Endothelial cell of umbilical vein (primary cell): ENCODE measurements at regions of chr17 and their contacts with region 1.

Region 1: GRCh38 chr17:50626037-50626574 is 8.6 kb upstream of the ABCC3 start:
- DNase-seq: peak; percentile 65
- H3K4me3 ChIP-seq: no peak overlapping the region
- H3K27ac ChIP-seq: no peak overlapping the region
- H3K4me1 ChIP-seq: peaks cover 2% of the 10 kb centered on the region
- H3K27me3 ChIP-seq: peaks cover 0 to 5% of the 10 kb centered on the region in 2 experiments
- CTCF ChIP-seq: peak; percentile 67 to 94
- POLR2A ChIP-seq: no peak

Region 2: DNA sequence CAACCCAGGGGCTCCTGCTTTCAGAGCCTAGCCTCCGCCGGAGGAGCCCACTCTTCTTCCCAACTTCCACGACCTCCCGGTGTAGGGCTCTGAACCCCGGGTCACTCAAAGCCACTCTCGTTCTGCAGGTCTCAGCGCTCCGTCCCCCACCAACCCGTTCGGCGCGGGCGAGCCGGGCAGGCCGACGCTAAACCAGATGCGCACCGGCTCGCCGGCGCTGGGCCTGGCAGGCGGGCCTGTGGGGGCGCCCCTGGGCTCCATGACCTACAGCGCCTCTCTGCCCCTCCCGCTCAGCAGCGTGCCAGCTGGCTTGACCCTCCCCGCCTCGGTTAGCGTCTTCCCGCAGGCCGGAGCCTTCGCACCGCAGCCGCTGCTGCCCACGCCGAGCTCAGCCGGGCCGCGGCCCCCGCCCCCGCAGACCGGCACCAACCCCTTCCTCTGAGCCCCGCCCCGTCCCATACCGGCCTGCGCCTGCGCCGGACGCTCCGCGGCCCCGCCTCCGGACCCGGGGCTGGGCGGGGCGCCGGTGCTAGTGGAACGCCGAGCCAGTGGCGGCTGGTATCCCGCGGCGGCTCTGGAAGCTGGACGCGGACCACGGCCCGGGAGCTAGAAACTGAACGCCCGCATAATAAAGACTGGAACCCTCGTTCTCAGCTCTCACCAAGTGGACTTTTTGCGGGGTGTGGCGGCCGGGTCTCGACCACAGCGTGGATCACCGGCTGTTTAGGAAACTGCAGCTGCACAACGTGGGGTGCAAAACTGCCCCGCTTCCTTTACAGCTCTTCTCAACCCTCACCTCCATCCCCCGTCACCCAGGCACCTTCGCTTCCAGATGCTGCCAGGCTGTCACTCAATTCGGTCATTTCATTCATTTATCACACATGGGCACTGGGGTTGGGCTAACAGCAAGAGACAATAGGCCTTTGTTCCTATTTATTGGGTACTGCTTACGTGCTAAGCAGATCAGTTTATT is 84.1 kb before region 1 on chr17:
- CTCF ChIA-PET with region 1: interaction called, 398 read pairs
- POLR2A ChIA-PET with region 1: no interaction called
- dilution Hi-C with region 1: no loop called
- intact Hi-C with region 1: loop called (anchors 1 kb)
- DNase-seq: peak; percentile 87
- H3K4me3 ChIP-seq: peak overlapping the region; percentile 45 to 62 (median 46)
- H3K27ac ChIP-seq: no peak overlapping the region
- H3K4me1 ChIP-seq: peaks cover 10% of the 10 kb centered on the region
- H3K27me3 ChIP-seq: no peaks in the 10 kb centered on the region
- CTCF ChIP-seq: peak; percentile 10 to 50
- POLR2A ChIP-seq: peak; percentile 81

Region 3: GRCh38 chr17:50589095-50589705 is 36.9 kb before region 1 on chr17:
- CTCF ChIA-PET with region 1: interaction called, 11 read pairs
- POLR2A ChIA-PET with region 1: no interaction called
- dilution Hi-C with region 1: no loop called
- intact Hi-C with region 1: no loop called
- DNase-seq: no peak
- H3K4me3 ChIP-seq: no peak overlapping the region
- H3K27ac ChIP-seq: no peak overlapping the region
- H3K4me1 ChIP-seq: no peaks in the 10 kb centered on the region
- H3K27me3 ChIP-seq: peaks cover 0 to 2% of the 10 kb centered on the region in 2 experiments
- CTCF ChIP-seq: no peak
- POLR2A ChIP-seq: no peak

Region 4: GRCh38 chr17:50604513-50604912 is 21.6 kb before region 1 on chr17:
- CTCF ChIA-PET with region 1: interaction called, 22 read pairs
- POLR2A ChIA-PET with region 1: no interaction called
- dilution Hi-C with region 1: no loop called
- intact Hi-C with region 1: no loop called
- DNase-seq: peak; percentile 88
- H3K4me3 ChIP-seq: no peak overlapping the region
- H3K27ac ChIP-seq: no peak overlapping the region
- H3K4me1 ChIP-seq: peaks cover 13% of the 10 kb centered on the region
- H3K27me3 ChIP-seq: peaks cover 2 to 3% of the 10 kb centered on the region in 2 experiments
- CTCF ChIP-seq: no peak
- POLR2A ChIP-seq: no peak

Region 5: DNA sequence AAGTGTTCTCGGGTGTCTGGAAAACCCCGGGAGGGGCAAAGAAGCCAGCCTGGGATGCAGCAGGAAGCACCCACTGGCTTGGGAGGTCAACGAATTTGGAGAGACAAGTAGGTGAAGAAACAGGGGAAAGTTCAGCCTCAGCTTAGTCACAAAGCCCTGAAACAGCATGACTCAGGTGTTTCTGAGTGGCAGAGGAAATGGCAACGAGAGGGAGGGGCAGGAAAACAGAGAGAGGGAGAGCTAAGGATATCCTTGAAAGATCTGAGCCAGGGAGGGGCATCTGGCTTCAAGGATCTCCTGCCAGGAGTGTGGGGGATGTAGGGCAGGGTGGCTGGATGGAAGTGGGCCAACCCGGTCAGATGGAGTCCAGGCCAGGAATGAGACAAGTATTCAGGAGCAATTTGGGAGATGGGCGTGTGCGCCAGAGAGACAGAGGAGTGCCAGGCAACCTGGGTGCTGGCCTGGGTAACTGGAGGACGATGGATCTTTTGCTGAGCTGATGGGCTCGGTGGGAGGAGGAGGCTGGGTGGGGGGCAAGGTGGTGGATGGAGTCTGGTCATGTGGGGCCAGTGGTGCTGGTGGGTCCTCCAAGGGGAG is 35.8 kb after region 1 on chr17:
- CTCF ChIA-PET with region 1: interaction called, 29 read pairs
- POLR2A ChIA-PET with region 1: no interaction called
- dilution Hi-C with region 1: no loop called
- intact Hi-C with region 1: no loop called
- DNase-seq: peak; percentile 86
- H3K4me3 ChIP-seq: no peak overlapping the region
- H3K27ac ChIP-seq: peak overlapping the region; percentile 90
- H3K4me1 ChIP-seq: peaks cover 31% of the 10 kb centered on the region
- H3K27me3 ChIP-seq: no peaks in the 10 kb centered on the region
- CTCF ChIP-seq: no peak
- POLR2A ChIP-seq: no peak

Region 6: DNA sequence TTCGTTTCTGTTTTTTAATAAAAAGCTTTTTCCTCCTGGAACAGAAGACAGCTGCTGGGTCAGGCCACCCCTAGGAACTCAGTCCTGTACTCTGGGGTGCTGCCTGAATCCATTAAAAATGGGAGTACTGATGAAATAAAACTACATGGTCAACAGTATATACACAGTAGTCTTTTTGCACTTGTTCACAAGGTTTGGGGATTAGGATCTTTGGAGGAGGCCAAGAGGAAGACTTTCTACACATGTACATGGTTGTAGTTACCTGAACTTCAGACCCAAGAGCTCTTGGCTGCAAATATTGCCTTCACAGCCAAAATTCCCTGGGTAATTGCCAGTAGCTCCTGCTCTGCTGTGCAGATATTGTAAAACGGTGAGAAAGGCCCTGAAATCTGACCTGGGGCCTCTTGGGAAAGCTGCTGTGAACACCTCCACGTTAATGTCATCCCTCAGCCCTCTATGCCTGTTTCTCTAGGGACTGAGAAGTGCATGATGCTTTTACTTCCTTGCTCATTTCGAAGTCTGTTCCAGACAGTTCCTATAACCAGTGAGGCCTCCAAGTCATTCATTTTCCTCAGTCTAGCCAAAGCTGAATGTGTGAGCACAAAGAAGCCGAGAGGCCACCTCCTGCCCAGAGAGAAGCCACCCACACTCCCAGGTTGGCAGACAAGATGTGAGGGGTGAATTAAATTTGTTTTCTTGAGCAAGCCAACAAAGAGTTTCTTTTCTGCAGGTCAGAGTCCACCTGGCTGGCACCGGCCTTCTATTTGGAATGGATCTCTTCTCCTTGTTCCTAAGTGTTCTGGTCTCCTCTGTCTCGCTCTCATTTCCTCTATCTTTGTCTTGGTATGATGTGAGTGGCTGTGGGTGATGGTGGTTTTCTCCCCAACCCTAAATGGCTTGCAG is 65.7 kb after region 1 on chr17:
- CTCF ChIA-PET with region 1: interaction called, 71 read pairs
- POLR2A ChIA-PET with region 1: no interaction called
- dilution Hi-C with region 1: no loop called
- intact Hi-C with region 1: loop called (anchors 1 kb)
- DNase-seq: no peak
- H3K4me3 ChIP-seq: no peak overlapping the region
- H3K27ac ChIP-seq: no peak overlapping the region
- H3K4me1 ChIP-seq: peaks cover 3% of the 10 kb centered on the region
- H3K27me3 ChIP-seq: no peaks in the 10 kb centered on the region
- CTCF ChIP-seq: no peak
- POLR2A ChIP-seq: no peak

Region 7: GRCh38 chr17:50707289-50708049 is 81.4 kb after region 1 on chr17 and contains the start of gene ANKRD40:
- CTCF ChIA-PET with region 1: interaction called, 12 read pairs
- POLR2A ChIA-PET with region 1: interaction called, 3 read pairs
- dilution Hi-C with region 1: no loop called
- intact Hi-C with region 1: no loop called
- DNase-seq: peak; percentile 93
- H3K4me3 ChIP-seq: peak within 1 kb of the TSS; percentile 37 to 93 (median 88)
- H3K27ac ChIP-seq: peak within 1 kb of the TSS; percentile 88
- H3K4me1 ChIP-seq: peaks cover 17% of the 10 kb centered on the region
- H3K27me3 ChIP-seq: peaks cover 2 to 4% of the 10 kb centered on the region in 2 experiments
- CTCF ChIP-seq: no peak
- POLR2A ChIP-seq: peak; percentile 78
- total RNA-seq, gene ANKRD40: 55.0 and 56.0 TPM in 2 replicates

Region 8: GRCh38 chr17:50758989-50759544 is 133.0 kb after region 1 on chr17:
- CTCF ChIA-PET with region 1: no interaction called
- POLR2A ChIA-PET with region 1: no interaction called
- dilution Hi-C with region 1: no loop called
- intact Hi-C with region 1: no loop called
- DNase-seq: no peak
- H3K4me3 ChIP-seq: no peak overlapping the region
- H3K27ac ChIP-seq: no peak overlapping the region
- H3K4me1 ChIP-seq: no peaks in the 10 kb centered on the region
- H3K27me3 ChIP-seq: peaks cover 7 to 9% of the 10 kb centered on the region in 2 experiments
- CTCF ChIP-seq: no peak
- POLR2A ChIP-seq: no peak

Region 9: DNA sequence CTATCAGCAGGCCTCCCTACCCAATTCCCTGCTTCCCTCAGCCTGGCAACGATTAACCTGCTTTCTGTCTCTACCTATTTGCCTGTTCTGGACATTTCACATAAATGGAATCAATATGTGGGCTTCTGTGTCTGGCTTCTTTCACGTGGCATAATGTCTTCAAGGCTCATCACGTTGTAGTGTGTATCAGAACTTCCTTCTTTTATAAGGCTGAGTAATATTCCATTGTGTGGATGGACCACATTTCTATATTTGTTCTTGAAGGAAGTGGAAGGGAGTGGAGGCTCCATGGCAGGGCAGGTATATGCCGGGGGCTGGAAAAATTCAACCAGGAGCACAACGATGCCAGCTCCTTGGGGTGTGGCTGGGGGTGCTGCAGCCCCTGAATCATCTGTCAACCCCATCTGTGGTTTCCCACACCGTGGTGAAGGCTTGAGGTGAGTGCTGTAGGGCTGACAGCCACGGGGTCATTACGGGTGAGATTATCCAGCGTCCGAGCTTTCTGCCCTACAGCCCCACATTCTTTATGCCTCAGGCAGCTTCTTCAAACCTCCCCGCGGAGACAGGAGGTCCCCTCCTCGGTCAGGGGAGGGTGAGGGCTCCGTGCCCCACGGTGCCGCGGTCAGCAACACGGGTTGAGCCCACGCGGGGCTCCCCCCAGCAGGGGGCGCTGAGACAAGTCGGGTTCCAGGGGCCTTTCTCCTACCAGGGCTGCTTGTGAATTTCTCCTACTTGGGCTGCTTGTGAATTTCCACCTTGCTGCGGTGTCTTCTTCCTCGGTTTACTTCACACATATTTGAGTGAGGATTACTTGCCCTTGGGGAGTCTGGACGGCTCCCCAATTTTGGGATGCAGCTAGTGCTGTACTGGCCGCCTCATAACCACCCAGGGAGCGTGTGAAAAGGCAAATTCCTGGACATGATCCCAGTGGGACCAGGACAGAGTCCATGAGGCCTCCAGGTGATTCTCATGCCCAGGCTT is 191.0 kb after region 1 on chr17:
- CTCF ChIA-PET with region 1: no interaction called
- POLR2A ChIA-PET with region 1: no interaction called
- dilution Hi-C with region 1: no loop called
- intact Hi-C with region 1: no loop called
- DNase-seq: no peak
- H3K4me3 ChIP-seq: no peak overlapping the region
- H3K27ac ChIP-seq: no peak overlapping the region
- H3K4me1 ChIP-seq: no peaks in the 10 kb centered on the region
- H3K27me3 ChIP-seq: peaks cover 0 to 5% of the 10 kb centered on the region in 2 experiments
- CTCF ChIP-seq: peak; percentile 84 to 93
- POLR2A ChIP-seq: no peak